ENCODE measurements at regions of chr5 and their contacts with region 1.

Region 1: DNA sequence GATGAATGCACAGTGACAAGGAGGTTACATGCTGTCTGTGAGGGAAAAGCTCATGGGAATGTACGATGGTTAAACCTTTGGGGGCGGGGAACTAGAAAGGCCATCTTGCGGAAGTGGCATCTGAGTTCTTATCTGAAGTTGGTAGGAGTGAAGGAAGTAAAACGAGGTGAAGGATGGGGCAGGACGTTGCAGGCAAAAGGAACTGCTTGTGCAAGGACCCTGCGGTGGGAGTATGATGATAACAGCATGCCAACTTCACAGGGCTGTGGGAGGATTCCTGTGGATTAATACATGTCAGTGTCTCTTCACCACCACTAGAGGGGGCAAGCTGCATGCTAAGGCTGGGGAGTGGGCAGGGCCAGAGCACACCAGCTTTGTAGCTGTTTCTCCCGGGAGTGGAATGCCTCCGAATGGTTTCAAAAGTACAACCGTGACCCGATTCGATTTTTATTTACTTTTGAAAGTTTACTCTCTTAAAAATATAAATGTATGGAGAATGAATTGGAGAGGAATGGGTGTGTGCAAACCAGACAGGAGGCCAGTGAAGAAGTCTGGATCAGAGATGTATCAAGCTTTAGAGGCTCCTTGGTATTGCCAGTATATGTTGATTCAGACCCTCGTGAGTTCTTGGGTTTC is 62.5 kb downstream of the CYFIP2 start:
- DNase-seq: peak in 3 of 4 donors; percentile 64 to 84 (median 69)
- ATAC-seq: peak; percentile 100
- H3K4me3 ChIP-seq: no peak overlapping the region
- H3K27ac ChIP-seq: peak overlapping the region in 1 of 2 donors; percentile 64
- H3K4me1 ChIP-seq: peaks cover 0 to 12% of the 10 kb centered on the region in 2 donors
- H3K27me3 ChIP-seq: no peaks in the 10 kb centered on the region
- CTCF ChIP-seq: peak; percentile 75 to 91

Region 2: DNA sequence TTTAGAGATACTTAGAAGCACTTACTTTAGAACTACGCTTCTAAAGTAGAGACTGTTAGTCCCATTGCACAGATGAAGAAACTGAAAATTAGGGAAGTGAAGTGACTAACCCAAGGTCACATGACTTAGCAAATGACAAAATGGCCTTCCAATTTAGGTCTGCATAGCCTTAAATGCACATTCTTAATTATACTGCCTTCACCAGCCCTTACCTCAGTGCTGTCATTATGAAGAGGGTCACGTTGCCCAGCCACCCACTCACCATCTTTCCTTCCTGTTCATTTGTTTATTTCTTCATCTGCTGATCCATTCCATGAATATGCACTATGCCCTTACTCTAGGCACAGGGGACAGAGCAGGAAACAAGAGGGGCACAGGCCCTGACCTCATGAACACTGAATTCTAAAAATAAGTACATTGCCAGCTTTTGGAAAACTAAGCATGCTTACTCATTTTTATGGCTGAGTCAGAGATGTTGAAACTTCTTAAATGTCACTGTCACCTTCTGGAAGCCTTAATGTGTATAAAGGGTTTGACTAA is 228.2 kb before region 1 on chr5:
- intact Hi-C with region 1: no loop called
- DNase-seq: peak in 1 of 4 donors; percentile 38
- ATAC-seq: peak; percentile 80
- H3K4me3 ChIP-seq: no peak overlapping the region
- H3K27ac ChIP-seq: peak overlapping the region in 1 of 2 donors; percentile 57
- H3K4me1 ChIP-seq: peaks cover 0 to 29% of the 10 kb centered on the region in 2 donors
- H3K27me3 ChIP-seq: no peaks in the 10 kb centered on the region
- CTCF ChIP-seq: no peak

Region 3: GRCh38 chr5:157253547-157253946 is 74.8 kb before region 1 on chr5:
- intact Hi-C with region 1: no loop called
- DNase-seq: no peak
- ATAC-seq: peak; percentile 95
- H3K4me3 ChIP-seq: no peak overlapping the region
- H3K27ac ChIP-seq: no peak overlapping the region
- H3K4me1 ChIP-seq: peaks cover 0 to 8% of the 10 kb centered on the region in 2 donors
- H3K27me3 ChIP-seq: no peaks in the 10 kb centered on the region
- CTCF ChIP-seq: peak; percentile 81 to 85

Region 4: GRCh38 chr5:157400741-157401495 is 72.5 kb after region 1 on chr5:
- intact Hi-C with region 1: no loop called
- DNase-seq: no peak
- ATAC-seq: no peak
- H3K4me3 ChIP-seq: no peak overlapping the region
- H3K27ac ChIP-seq: no peak overlapping the region
- H3K4me1 ChIP-seq: no peaks in the 10 kb centered on the region
- H3K27me3 ChIP-seq: no peaks in the 10 kb centered on the region
- CTCF ChIP-seq: no peak

Region 5: DNA sequence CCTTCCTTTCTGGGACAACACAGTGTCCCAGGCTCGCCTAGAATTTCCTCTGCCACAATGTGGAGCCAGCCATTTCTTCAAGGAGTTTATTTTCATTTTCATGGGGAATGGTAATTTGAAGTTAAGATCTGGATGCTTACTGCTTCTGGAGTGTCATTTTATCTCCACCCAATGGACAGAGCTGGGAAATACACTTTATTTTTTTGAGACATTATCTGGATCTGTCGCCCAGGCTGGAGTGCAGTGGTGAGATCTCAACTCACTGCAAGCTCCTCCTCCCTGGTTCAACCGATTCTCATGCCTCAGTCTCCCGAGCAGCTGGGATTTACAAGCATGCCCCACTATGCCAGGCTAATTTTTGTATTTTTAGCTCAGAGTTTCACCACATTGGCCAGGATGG is 390.1 kb after region 1 on chr5:
- intact Hi-C with region 1: loop called in 1 of 2 experiments (anchors 10 kb)
- DNase-seq: peak in 2 of 4 donors; percentile 40 to 70
- ATAC-seq: peak; percentile 90
- H3K4me3 ChIP-seq: no peak overlapping the region
- H3K27ac ChIP-seq: no peak overlapping the region
- H3K4me1 ChIP-seq: no peaks in the 10 kb centered on the region
- H3K27me3 ChIP-seq: no peaks in the 10 kb centered on the region
- CTCF ChIP-seq: peak; percentile 36 to 53